PC-3 (cell line): ENCODE measurements at regions of chr14 and their contacts with region 1.

Region 1: GRCh38 chr14:51873221-51873893 is 12.9 kb downstream of the GNG2 start:
- DNase-seq: peak; percentile 97
- ATAC-seq: peak; percentile 93
- H3K4me3 ChIP-seq: peak overlapping the region; percentile 20; the same call in 1 of the 2 replicates
- H3K27ac ChIP-seq: peak overlapping the region; percentile 92
- H3K4me1 ChIP-seq: peaks cover 26% of the 10 kb centered on the region
- H3K27me3 ChIP-seq: no peaks in the 10 kb centered on the region
- CTCF ChIP-seq: no peak

Region 2: DNA sequence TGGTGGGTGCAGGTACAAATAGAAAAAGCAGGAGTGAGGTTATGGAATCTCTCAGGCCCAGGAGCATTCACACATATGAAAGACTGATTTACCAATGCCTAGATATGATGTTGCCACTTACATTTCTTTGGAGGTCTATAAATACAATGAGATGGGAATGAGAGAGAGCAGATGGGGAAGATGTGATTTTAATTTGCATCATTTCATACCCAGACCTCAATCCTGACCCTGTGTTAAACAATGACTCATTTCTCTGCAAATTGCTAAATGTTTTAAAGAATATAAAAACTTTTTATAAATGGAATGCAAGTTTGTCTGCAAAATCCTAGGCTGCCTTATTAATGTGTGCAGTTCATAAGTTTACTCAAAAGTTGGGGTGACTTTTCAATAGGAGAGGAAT is 51.5 kb before region 1 on chr14:
- CTCF ChIA-PET with region 1: interaction called, 3 read pairs
- POLR2A ChIA-PET with region 1: no interaction called
- intact Hi-C with region 1: loop called (anchors 1 kb)
- DNase-seq: peak; percentile 9
- ATAC-seq: peak; percentile 55
- H3K4me3 ChIP-seq: no peak overlapping the region
- H3K27ac ChIP-seq: no peak overlapping the region
- H3K4me1 ChIP-seq: peaks cover 25% of the 10 kb centered on the region
- H3K27me3 ChIP-seq: no peaks in the 10 kb centered on the region
- CTCF ChIP-seq: no peak

Region 3: DNA sequence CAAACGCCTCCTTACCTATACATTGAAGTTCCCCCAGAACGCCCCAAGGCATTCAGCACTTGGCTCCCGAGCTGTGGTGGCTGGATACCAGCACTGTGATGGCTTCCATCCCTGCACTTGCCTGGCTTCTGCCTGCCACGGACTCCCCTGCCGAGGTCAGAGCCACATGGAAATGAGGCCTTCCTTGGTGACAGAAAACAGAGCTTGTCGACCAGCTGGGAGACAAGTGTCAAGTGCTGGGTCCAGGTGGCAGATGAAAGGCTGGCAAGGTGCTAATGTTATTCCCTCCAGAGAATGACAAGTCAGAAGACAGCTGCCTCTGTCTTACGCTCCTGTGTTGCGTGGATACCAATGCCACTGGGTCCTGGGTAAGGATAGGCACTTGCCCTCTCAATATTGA is 39.1 kb before region 1 on chr14:
- CTCF ChIA-PET with region 1: no interaction called
- POLR2A ChIA-PET with region 1: no interaction called
- intact Hi-C with region 1: loop called (anchors 1 kb)
- DNase-seq: no peak
- ATAC-seq: no peak
- H3K4me3 ChIP-seq: no peak overlapping the region
- H3K27ac ChIP-seq: no peak overlapping the region
- H3K4me1 ChIP-seq: peaks cover 17% of the 10 kb centered on the region
- H3K27me3 ChIP-seq: no peaks in the 10 kb centered on the region
- CTCF ChIP-seq: no peak

Region 4: GRCh38 chr14:51901475-51902024 is 28.2 kb after region 1 on chr14:
- CTCF ChIA-PET with region 1: no interaction called
- POLR2A ChIA-PET with region 1: no interaction called
- intact Hi-C with region 1: loop called (anchors 1 kb)
- DNase-seq: no peak
- ATAC-seq: no peak
- H3K4me3 ChIP-seq: no peak overlapping the region
- H3K27ac ChIP-seq: no peak overlapping the region
- H3K4me1 ChIP-seq: peaks cover 5% of the 10 kb centered on the region
- H3K27me3 ChIP-seq: no peaks in the 10 kb centered on the region
- CTCF ChIP-seq: no peak

Region 5: DNA sequence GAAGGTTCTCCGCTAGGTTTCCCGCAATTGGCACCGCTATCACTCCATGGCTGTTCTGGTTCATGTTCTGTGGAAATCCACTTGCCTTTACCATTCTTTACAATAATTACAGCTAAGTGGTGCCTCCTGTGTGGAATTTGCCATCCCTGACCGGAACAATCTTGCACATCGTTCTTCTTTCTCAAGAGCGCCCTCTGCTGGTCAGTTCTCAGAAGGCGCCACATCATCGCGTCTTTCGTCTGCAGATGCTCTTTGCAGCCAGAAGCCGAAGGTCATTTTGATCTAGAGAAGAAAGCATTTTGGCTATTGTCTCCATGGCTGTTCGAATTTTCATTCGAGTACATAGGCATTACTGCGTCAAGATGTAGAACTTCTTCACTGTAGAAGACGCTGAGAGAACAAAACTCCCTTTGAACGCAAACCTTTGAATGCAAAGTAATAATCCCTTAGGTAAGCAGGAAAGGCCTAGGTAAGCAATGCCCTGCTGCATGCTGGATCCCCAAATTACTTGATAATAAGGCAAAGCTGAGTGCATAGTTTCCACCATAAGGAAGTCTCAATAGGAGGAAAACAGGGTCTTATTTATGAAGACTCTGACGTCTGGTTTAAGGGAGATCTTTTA is 105.8 kb after region 1 on chr14:
- CTCF ChIA-PET with region 1: interaction called, 5 read pairs
- POLR2A ChIA-PET with region 1: no interaction called
- intact Hi-C with region 1: loop called (anchors 1 kb)
- DNase-seq: peak; percentile 93
- ATAC-seq: peak; percentile 96
- H3K4me3 ChIP-seq: no peak overlapping the region
- H3K27ac ChIP-seq: no peak overlapping the region
- H3K4me1 ChIP-seq: no peaks in the 10 kb centered on the region
- H3K27me3 ChIP-seq: no peaks in the 10 kb centered on the region
- CTCF ChIP-seq: peak; percentile 97